AG04450 (cell line): ENCODE measurements at regions of chr5 and their contacts with region 1.

Region 1: GRCh38 chr5:10627160-10627701 is 63.4 kb downstream of the ANKRD33B start:
- DNase-seq: no peak
- H3K4me3 ChIP-seq: peak overlapping the region; percentile 40
- H3K27ac ChIP-seq: peak overlapping the region; percentile 68
- H3K27me3 ChIP-seq: no peaks in the 10 kb centered on the region
- CTCF ChIP-seq: no peak

Region 2: GRCh38 chr5:10452768-10453331 is 174.4 kb before region 1 on chr5:
- CTCF ChIA-PET with region 1: interaction called, 162 read pairs
- POLR2A ChIA-PET with region 1: interaction called, 16 read pairs
- DNase-seq: peak; percentile 74
- H3K4me3 ChIP-seq: no peak overlapping the region
- H3K27ac ChIP-seq: no peak overlapping the region
- H3K27me3 ChIP-seq: no peaks in the 10 kb centered on the region
- CTCF ChIP-seq: peak; percentile 82

Region 3: DNA sequence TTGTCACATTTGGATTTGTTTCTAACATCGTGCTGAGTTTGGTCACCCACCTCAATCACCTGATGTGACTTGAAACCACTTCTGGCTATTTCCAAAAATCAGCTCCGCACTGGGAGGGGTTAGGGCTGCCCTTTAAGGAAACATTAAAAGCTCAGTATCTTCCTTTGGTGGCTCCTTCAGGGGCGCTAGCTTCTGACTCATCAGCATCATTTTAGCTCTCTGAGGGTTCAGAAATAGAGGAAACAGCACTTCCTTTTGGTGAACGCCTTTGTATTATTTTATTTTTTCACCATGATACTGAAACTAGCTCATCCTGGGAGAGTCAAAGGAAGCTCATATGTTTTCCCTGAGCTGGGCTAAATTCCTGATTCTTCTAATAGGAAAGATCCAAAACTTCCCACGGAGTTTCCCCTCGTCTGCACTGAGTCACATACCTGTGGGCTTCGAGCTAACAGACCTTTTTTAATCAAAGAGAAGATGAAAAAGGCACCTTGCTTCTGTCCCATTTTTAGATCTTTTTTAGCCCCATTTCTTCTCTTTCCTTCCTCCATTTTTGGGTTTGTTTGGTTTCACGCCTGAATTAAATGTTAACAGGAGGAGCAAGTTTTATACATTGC is 137.3 kb before region 1 on chr5:
- CTCF ChIA-PET with region 1: interaction called, 12 read pairs
- POLR2A ChIA-PET with region 1: interaction called, 3 read pairs
- DNase-seq: no peak
- H3K4me3 ChIP-seq: no peak overlapping the region
- H3K27ac ChIP-seq: no peak overlapping the region
- H3K27me3 ChIP-seq: peaks cover 3% of the 10 kb centered on the region
- CTCF ChIP-seq: no peak

Region 4: GRCh38 chr5:10592598-10592997 is 34.6 kb before region 1 on chr5:
- CTCF ChIA-PET with region 1: interaction called, 10 read pairs
- POLR2A ChIA-PET with region 1: no interaction called
- DNase-seq: no peak
- H3K4me3 ChIP-seq: no peak overlapping the region
- H3K27ac ChIP-seq: no peak overlapping the region
- H3K27me3 ChIP-seq: no peaks in the 10 kb centered on the region
- CTCF ChIP-seq: no peak

Region 5: DNA sequence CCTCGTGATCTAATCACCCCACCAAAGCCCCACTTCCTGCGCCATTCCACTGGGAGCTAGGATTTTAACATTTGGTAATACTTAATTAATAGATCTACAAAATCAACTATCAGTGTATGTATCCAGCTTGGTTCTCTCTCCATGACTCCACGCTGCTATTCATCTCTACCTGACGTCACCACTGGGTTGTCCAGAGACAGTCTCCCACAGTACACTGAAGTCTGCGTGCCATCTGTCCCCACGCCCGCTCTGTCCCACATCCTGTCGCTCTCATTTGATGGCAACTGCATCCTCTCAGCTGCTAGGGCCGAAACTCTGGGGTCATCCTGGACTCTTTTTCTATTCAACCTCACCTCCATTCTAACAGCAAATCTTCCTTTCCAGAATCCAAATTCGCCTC is 10.1 kb before region 1 on chr5:
- CTCF ChIA-PET with region 1: interaction called, 15 read pairs
- POLR2A ChIA-PET with region 1: no interaction called
- DNase-seq: no peak
- H3K4me3 ChIP-seq: no peak overlapping the region
- H3K27ac ChIP-seq: no peak overlapping the region
- H3K27me3 ChIP-seq: no peaks in the 10 kb centered on the region
- CTCF ChIP-seq: no peak

Region 6: DNA sequence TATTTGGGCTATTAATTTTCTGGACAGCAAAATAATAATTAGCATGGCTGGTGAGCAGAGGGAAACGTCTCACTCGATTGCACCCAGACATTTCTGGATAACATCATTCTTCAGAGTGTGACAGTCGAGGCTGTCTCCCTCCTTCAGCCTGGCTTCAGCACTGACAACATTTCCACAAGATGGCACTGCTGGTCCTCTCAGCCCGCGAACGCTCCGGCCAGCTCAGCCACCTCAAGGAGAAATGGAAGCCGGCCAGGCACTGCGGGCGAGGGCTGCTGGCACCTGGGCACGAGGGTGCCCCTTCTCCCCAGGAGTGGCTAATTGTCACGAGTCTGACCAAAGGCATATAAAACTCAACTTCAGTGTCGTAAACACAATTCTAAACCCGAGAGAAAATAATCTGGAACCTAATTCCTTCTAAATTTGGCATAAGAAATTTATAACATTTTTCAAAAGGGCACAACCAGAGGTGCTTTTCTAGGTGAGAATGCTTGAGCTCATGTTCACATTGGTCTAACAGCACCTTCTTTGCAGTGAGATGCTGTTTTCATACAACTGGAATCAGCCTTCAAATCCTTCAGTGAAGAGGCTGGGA is 67.9 kb after region 1 on chr5:
- CTCF ChIA-PET with region 1: no interaction called
- POLR2A ChIA-PET with region 1: no interaction called
- DNase-seq: no peak
- H3K4me3 ChIP-seq: no peak overlapping the region
- H3K27ac ChIP-seq: peak overlapping the region; percentile 3
- H3K27me3 ChIP-seq: no peaks in the 10 kb centered on the region
- CTCF ChIP-seq: peak; percentile 87

Region 7: GRCh38 chr5:10760096-10760915 is 133.1 kb after region 1 on chr5:
- CTCF ChIA-PET with region 1: interaction called, 12 read pairs
- POLR2A ChIA-PET with region 1: no interaction called
- DNase-seq: no peak
- H3K4me3 ChIP-seq: peak overlapping the region; percentile 71
- H3K27ac ChIP-seq: peak overlapping the region; percentile 75
- H3K27me3 ChIP-seq: no peaks in the 10 kb centered on the region
- CTCF ChIP-seq: no peak